ENCODE measurements at regions of chr1 and their contacts with region 1.

Region 1: GRCh38 chr1:239413916-239414315 is 27.5 kb downstream of the CHRM3 start:
- DNase-seq: no peak
- ATAC-seq: no peak
- H3K4me3 ChIP-seq: no peak overlapping the region
- H3K4me3 Mint-ChIP-seq: no peak overlapping the region
- H3K27ac ChIP-seq: no peak overlapping the region
- H3K27ac Mint-ChIP-seq: no peak overlapping the region
- H3K4me1 ChIP-seq: no peaks in the 10 kb centered on the region
- H3K4me1 Mint-ChIP-seq: no peaks in the 10 kb centered on the region
- H3K27me3 ChIP-seq: no peaks in the 10 kb centered on the region
- H3K27me3 Mint-ChIP-seq: no peaks in the 10 kb centered on the region
- CTCF ChIP-seq: no peak

Region 2: GRCh38 chr1:239293350-239294110 is 120.4 kb before region 1 on chr1:
- CTCF ChIA-PET with region 1: no interaction called
- POLR2A ChIA-PET with region 1: no interaction called
- intact Hi-C with region 1: no loop called
- DNase-seq: no peak
- ATAC-seq: no peak
- H3K4me3 ChIP-seq: no peak overlapping the region
- H3K4me3 Mint-ChIP-seq: no peak overlapping the region
- H3K27ac ChIP-seq: no peak overlapping the region
- H3K27ac Mint-ChIP-seq: no peak overlapping the region
- H3K4me1 ChIP-seq: no peaks in the 10 kb centered on the region
- H3K4me1 Mint-ChIP-seq: no peaks in the 10 kb centered on the region
- H3K27me3 ChIP-seq: no peaks in the 10 kb centered on the region
- H3K27me3 Mint-ChIP-seq: no peaks in the 10 kb centered on the region
- CTCF ChIP-seq: no peak

Region 3: GRCh38 chr1:239898062-239898730 is 484.3 kb after region 1 on chr1:
- CTCF ChIA-PET with region 1: no interaction called
- POLR2A ChIA-PET with region 1: no interaction called
- intact Hi-C with region 1: loop called (anchors 5 kb)
- DNase-seq: peak; percentile 62
- ATAC-seq: peak; percentile 47
- H3K4me3 ChIP-seq: no peak overlapping the region
- H3K4me3 Mint-ChIP-seq: no peak overlapping the region
- H3K27ac ChIP-seq: no peak overlapping the region
- H3K27ac Mint-ChIP-seq: no peak overlapping the region
- H3K4me1 ChIP-seq: peaks cover 3% of the 10 kb centered on the region in 2 donors
- H3K4me1 Mint-ChIP-seq: peaks cover 2% of the 10 kb centered on the region
- H3K27me3 ChIP-seq: no peaks in the 10 kb centered on the region
- H3K27me3 Mint-ChIP-seq: no peaks in the 10 kb centered on the region
- CTCF ChIP-seq: peak; percentile 90